ENCODE measurements at regions of chr12 and their contacts with region 1.

Region 1: GRCh38 chr12:77995436-77996167 is 164.9 kb downstream of the NAV3 start:
- DNase-seq: peak; percentile 85
- ATAC-seq: peak; percentile 99
- H3K4me3 ChIP-seq: no peak overlapping the region
- H3K27ac ChIP-seq: no peak overlapping the region
- H3K4me1 ChIP-seq: peaks cover 11% of the 10 kb centered on the region
- H3K27me3 ChIP-seq: no peaks in the 10 kb centered on the region
- CTCF ChIP-seq: no peak

Region 2: GRCh38 chr12:77724367-77724957 is 271.1 kb before region 1 on chr12:
- CTCF ChIA-PET with region 1: no interaction called
- POLR2A ChIA-PET with region 1: no interaction called
- intact Hi-C with region 1: loop called (anchors 5 kb)
- DNase-seq: peak; percentile 60
- ATAC-seq: peak; percentile 62; the same call in 1 of the 2 replicates
- H3K4me3 ChIP-seq: no peak overlapping the region
- H3K27ac ChIP-seq: no peak overlapping the region
- H3K4me1 ChIP-seq: no peaks in the 10 kb centered on the region
- H3K27me3 ChIP-seq: no peaks in the 10 kb centered on the region
- CTCF ChIP-seq: peak; percentile 84

Region 3: DNA sequence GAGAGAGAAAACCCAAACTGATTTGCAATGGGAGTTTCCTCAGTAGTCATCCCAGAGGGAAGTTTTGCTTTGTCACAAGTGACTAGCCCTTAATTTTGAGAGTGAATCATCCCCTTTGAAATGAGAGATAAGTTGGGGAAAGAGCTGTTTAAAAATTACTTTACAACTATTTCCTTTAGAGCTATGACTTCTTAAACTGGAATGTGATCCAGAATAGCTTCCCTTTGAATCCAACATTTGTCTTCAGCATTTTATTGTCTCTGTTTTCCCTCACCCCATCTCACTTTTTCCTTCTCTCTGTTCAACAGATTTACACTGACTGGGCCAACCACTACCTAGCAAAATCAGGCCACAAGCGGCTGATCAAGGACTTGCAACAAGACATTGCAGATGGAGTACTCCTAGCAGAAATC is 55.6 kb before region 1 on chr12:
- CTCF ChIA-PET with region 1: no interaction called
- POLR2A ChIA-PET with region 1: no interaction called
- intact Hi-C with region 1: loop called (anchors 5 kb)
- DNase-seq: peak; percentile 90
- ATAC-seq: peak; percentile 89
- H3K4me3 ChIP-seq: peak overlapping the region; percentile 56
- H3K27ac ChIP-seq: peak overlapping the region; percentile 68
- H3K4me1 ChIP-seq: peaks cover 46% of the 10 kb centered on the region
- H3K27me3 ChIP-seq: no peaks in the 10 kb centered on the region
- CTCF ChIP-seq: no peak

Region 4: DNA sequence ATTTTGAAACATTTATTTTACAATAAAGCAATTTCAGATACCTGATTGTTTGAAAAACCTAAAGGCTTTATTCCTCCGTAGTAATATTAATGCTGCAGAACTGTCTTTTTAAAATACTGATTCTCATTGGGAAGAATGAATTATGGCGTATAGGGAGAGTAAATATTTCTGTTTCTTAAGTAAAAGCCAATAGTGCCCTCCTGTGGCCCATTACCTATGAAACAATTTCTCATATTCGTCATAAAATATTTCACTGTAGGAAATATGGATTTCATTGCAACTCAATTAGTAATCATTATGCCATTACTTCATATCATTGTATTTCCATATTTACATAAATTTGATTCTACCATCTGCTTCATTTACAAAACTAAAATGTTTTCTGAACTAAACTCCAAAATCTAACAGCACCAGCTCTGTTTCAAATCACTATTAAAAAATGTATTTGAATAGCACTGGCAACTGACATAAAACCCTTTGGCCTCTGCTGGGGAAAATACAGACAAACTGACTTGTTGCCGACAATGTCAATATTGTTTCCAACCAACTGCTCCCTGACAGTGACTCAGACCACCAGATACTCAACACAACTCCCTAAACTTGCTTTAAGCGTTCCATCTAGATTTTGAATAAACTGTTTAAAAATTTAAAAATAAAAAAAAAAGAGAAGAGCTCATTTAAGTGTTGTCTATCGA is 125.4 kb after region 1 on chr12:
- CTCF ChIA-PET with region 1: no interaction called
- POLR2A ChIA-PET with region 1: no interaction called
- intact Hi-C with region 1: loop called (anchors 1 kb)
- DNase-seq: peak; percentile 64
- ATAC-seq: peak; percentile 49; the same call in 1 of the 2 replicates
- H3K4me3 ChIP-seq: no peak overlapping the region
- H3K27ac ChIP-seq: no peak overlapping the region
- H3K4me1 ChIP-seq: peaks cover 8% of the 10 kb centered on the region
- H3K27me3 ChIP-seq: no peaks in the 10 kb centered on the region
- CTCF ChIP-seq: peak; percentile 77

Region 5: GRCh38 chr12:78249578-78249977 is 254.0 kb after region 1 on chr12:
- CTCF ChIA-PET with region 1: no interaction called
- POLR2A ChIA-PET with region 1: no interaction called
- intact Hi-C with region 1: no loop called
- DNase-seq: peak; percentile 37
- ATAC-seq: peak; percentile 95
- H3K4me3 ChIP-seq: no peak overlapping the region
- H3K27ac ChIP-seq: no peak overlapping the region
- H3K4me1 ChIP-seq: peaks cover 6% of the 10 kb centered on the region; the same call in 1 of the 2 replicates
- H3K27me3 ChIP-seq: no peaks in the 10 kb centered on the region
- CTCF ChIP-seq: no peak

Measured in PC-3 (cell line).